Activated CD4-positive, alpha-beta T cell treated with anti-CD3 and anti-CD28 coated beads, Interleukin-2, amount 10 ng/mL, durations not matched to agents 24 days and 14 days (primary cell): ENCODE measurements at regions of chr6 and their contacts with region 1.

Region 1: GRCh38 chr6:127539272-127539671 is 20.1 kb upstream of the MTCL3 start:
- DNase-seq: no peak
- H3K4me3 Mint-ChIP-seq: no peak overlapping the region
- H3K27ac Mint-ChIP-seq: no peak overlapping the region
- H3K4me1 Mint-ChIP-seq: peaks cover 3% of the 10 kb centered on the region
- H3K27me3 Mint-ChIP-seq: peaks cover 27% of the 10 kb centered on the region

Region 2: DNA sequence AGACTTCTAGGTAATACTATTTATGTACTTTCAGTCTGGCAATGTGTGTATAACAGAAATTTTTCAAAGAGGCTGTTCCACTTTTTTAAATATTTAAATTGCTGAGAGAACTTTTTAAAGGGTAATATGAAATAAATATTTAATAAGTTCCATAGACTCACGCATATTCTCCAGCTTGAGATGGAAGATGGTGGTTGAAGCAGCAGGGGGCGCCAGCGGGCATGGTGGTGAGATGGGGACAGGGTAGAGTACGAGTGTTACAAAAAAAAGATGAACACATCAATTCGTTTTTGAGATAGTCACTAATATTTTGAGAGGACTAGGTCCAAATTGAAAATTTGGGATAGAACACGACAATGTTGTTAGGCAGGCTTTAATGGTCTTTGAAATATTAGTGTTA is 352.4 kb before region 1 on chr6:
- intact Hi-C with region 1: loop called (anchors 2 kb)
- DNase-seq: peak; percentile 87
- H3K4me3 Mint-ChIP-seq: no peak overlapping the region
- H3K27ac Mint-ChIP-seq: no peak overlapping the region
- H3K4me1 Mint-ChIP-seq: no peaks in the 10 kb centered on the region
- H3K27me3 Mint-ChIP-seq: peaks cover 20% of the 10 kb centered on the region

Region 3: GRCh38 chr6:127302728-127303660 is 236.3 kb before region 1 on chr6:
- intact Hi-C with region 1: loop called (anchors 2 kb)
- DNase-seq: peak; percentile 81
- H3K4me3 Mint-ChIP-seq: no peak overlapping the region
- H3K27ac Mint-ChIP-seq: no peak overlapping the region
- H3K4me1 Mint-ChIP-seq: peaks cover 6% of the 10 kb centered on the region
- H3K27me3 Mint-ChIP-seq: no peaks in the 10 kb centered on the region